ENCODE measurements at regions of chr5 and their contacts with region 1.

Region 1: GRCh38 chr5:140868721-140869554 is at the start of gene PCDHA11:
- DNase-seq: no peak
- H3K4me3 Mint-ChIP-seq: no peak within 1 kb of the TSS
- H3K27ac Mint-ChIP-seq: no peak within 1 kb of the TSS
- H3K4me1 Mint-ChIP-seq: no peaks in the 10 kb centered on the region
- H3K27me3 Mint-ChIP-seq: no peaks in the 10 kb centered on the region
- total RNA-seq, gene PCDHA11: not detected in 2 replicates

Region 2: DNA sequence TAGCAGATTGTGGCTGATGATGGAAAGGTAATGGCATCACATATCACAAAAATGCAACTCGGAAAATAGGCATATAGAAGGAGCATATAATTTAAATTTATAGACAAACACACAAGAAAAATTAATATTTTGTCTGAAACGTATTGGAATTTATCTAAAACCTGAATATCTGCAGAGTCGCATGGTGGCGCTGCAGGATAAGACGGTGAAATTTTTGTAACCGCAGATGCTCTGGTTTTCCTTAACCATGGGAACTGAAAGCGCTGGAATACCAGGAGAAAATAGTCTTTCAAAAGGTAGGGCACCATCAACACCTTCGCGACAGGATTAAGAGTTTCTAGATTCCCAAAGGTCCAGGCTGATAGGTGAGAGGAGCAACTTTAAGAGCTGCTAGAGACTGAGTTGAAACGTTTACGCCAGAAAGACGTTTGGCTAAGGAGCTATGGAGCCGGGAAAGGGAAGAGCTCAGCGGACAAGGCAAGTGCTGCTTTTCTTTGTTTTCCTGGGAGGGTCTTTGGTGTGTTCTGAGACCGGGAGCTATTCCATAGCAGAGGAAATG is 365.2 kb after region 1 on chr5:
- intact Hi-C with region 1: loop called (anchors 10 kb)
- DNase-seq: no peak
- H3K4me3 Mint-ChIP-seq: no peak overlapping the region
- H3K27ac Mint-ChIP-seq: no peak overlapping the region
- H3K4me1 Mint-ChIP-seq: no peaks in the 10 kb centered on the region
- H3K27me3 Mint-ChIP-seq: peaks cover 3% of the 10 kb centered on the region

Measured in activated T-helper 1 cell treated with anti-CD3 and anti-CD28 coated beads, Interleukin-12 subunit alpha, Interleukin-12 subunit beta, Interleukin-2, Interleukin-4 antibody, amounts not matched to agents 30 ng/mL and 10 ng/mL and 1 ng/mL, durations not matched to agents 14 hours and 24 hours and 36 hours (primary cell).